ENCODE measurements at regions of chr2 and their contacts with region 1.

Region 1: DNA sequence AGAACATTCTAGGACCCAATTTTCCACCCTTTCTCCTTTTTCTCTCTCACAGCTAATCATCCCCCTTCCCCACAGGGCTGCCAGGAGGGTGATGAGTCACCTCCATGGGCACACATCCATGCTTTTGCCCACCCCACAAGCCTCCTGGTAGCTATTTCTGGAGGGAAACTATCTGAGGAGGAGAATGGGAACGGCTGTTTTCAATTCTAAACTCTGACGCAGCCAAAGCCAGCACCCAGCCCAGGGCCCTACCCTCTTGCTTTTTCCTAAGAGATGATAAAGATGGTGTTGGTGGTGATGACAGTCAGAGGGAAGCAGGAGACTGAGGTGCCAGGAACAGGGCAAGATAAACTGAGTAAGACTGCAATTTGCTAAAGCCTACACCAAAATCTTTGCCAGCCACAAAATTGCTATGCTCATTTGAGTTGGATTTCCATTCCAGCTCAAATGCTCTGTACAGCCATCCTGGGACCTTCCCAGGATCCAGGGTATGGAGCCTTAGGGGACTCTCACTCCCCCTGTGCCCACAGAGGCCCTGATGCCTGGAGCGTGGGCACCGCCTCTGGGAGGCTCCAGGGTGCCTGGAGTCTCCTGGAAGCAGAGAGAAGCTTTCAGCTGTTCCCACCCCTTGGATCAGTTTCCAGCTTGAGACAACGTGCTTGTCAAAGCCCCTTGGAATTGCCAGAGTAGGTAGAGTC is 62.0 kb upstream of the FZD7 start:
- DNase-seq: no peak
- H3K4me3 ChIP-seq: peak overlapping the region; percentile 29 to 53 (median 48)
- H3K27ac ChIP-seq: peak overlapping the region; percentile 70
- H3K4me1 ChIP-seq: peaks cover 17 to 43% (median 36%) of the 10 kb centered on the region in 4 experiments
- H3K27me3 ChIP-seq: no peaks in the 10 kb centered on the region
- CTCF ChIP-seq: no peak
- EP300 ChIP-seq: no peak
- POLR2A ChIP-seq: no peak
- RAD21 ChIP-seq: no peak

Region 2: GRCh38 chr2:201654616-201655384 is 316.9 kb before region 1 on chr2:
- CTCF ChIA-PET with region 1: no interaction called
- POLR2A ChIA-PET with region 1: no interaction called
- DNase-seq: no peak
- H3K4me3 ChIP-seq: no peak overlapping the region
- H3K27ac ChIP-seq: no peak overlapping the region
- H3K4me1 ChIP-seq: no peaks in the 10 kb centered on the region; a peak in 1 of 7 replicates
- H3K27me3 ChIP-seq: no peaks in the 10 kb centered on the region
- CTCF ChIP-seq: no peak
- EP300 ChIP-seq: no peak
- POLR2A ChIP-seq: no peak
- RAD21 ChIP-seq: no peak

Region 3: GRCh38 chr2:201984800-201985525 is 13.3 kb after region 1 on chr2:
- CTCF ChIA-PET with region 1: interaction called, 6 read pairs
- POLR2A ChIA-PET with region 1: interaction called, 46 read pairs
- DNase-seq: no peak
- H3K4me3 ChIP-seq: no peak overlapping the region
- H3K27ac ChIP-seq: no peak overlapping the region
- H3K4me1 ChIP-seq: peaks cover 2 to 8% (median 4%) of the 10 kb centered on the region in 4 experiments; a peak in 3 of 7 replicates
- H3K27me3 ChIP-seq: no peaks in the 10 kb centered on the region
- CTCF ChIP-seq: peak; percentile 6 to 17 (median 16); a peak in 3 of 4 replicates
- EP300 ChIP-seq: no peak
- POLR2A ChIP-seq: no peak
- RAD21 ChIP-seq: peak; percentile 5 to 37; a peak in 2 of 4 replicates

Region 4: GRCh38 chr2:201996006-201996405 is 24.3 kb after region 1 on chr2:
- CTCF ChIA-PET with region 1: interaction called, 3 read pairs
- POLR2A ChIA-PET with region 1: interaction called, 49 read pairs
- DNase-seq: peak; percentile 79 to 94
- H3K4me3 ChIP-seq: peak overlapping the region in 1 of 4 experiments; percentile 26; a peak in 1 of 8 replicates
- H3K27ac ChIP-seq: peak overlapping the region; percentile 58
- H3K4me1 ChIP-seq: peaks cover 9 to 24% (median 22%) of the 10 kb centered on the region in 4 experiments
- H3K27me3 ChIP-seq: no peaks in the 10 kb centered on the region; a peak in 1 of 7 replicates
- CTCF ChIP-seq: no peak
- EP300 ChIP-seq: peak; percentile 52 to 95; a peak in 2 of 3 replicates
- POLR2A ChIP-seq: no peak
- RAD21 ChIP-seq: peak in 1 of 2 experiments; percentile 9; a peak in 1 of 4 replicates

Region 5: DNA sequence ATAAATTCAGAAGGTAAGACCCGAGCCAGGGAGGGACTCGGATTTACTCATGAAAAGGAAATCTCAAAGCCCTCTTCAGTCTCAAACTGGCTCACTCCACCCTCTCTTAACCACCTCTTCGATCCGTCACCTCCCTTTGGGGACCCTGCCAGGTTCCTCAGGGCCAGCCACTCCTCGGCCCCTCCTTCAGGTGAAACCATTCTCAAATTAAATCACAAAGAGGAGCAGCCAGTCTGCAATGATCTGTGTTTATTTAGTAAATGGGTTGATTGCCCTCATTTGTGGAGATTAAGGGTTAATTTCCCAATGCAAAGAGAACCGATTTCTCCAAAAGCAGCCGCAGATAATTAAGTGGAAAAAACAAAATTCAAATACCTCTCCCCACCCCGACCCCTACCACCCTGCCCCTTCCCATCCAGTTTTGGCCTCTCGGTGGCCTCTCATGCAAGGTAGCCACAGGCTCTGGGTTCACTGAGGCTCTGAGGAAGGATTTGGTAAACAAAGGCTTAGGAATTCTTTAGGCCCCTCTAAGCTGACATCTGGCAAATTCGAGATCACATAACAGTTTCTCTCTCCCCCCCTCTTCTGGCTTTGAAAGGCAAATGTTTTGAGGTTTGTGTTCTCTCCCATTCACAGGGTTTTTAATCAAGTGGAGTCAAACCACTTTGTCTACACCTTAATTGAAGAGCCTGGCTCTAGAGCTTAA is 51.7 kb after region 1 on chr2:
- CTCF ChIA-PET with region 1: interaction called, 11 read pairs
- POLR2A ChIA-PET with region 1: interaction called, 18 read pairs
- DNase-seq: peak; percentile 71 to 84
- H3K4me3 ChIP-seq: peak overlapping the region in 1 of 4 experiments; percentile 44; a peak in 2 of 8 replicates
- H3K27ac ChIP-seq: peak overlapping the region; percentile 66; the same call in 1 of the 2 replicates
- H3K4me1 ChIP-seq: peaks cover 13 to 28% (median 25%) of the 10 kb centered on the region in 4 experiments
- H3K27me3 ChIP-seq: peaks cover 0 to 3% (median 0%) of the 10 kb centered on the region in 4 experiments; a peak in 3 of 7 replicates
- CTCF ChIP-seq: peak in 2 of 3 experiments; percentile 2 to 16; a peak in 1 of 4 replicates
- EP300 ChIP-seq: peak in 1 of 2 experiments; percentile 64; a peak in 1 of 3 replicates
- POLR2A ChIP-seq: no peak
- RAD21 ChIP-seq: peak; percentile 9 to 35; a peak in 2 of 4 replicates

Region 6: GRCh38 chr2:202032754-202033320 is 61.2 kb after region 1 on chr2:
- CTCF ChIA-PET with region 1: interaction called, 6 read pairs
- POLR2A ChIA-PET with region 1: interaction called, 33 read pairs
- DNase-seq: peak in 1 of 2 experiments; percentile 84
- H3K4me3 ChIP-seq: peak overlapping the region; percentile 85 to 98 (median 98)
- H3K27ac ChIP-seq: peak overlapping the region; percentile 96
- H3K4me1 ChIP-seq: peaks cover 4 to 14% (median 6%) of the 10 kb centered on the region in 4 experiments
- H3K27me3 ChIP-seq: no peaks in the 10 kb centered on the region
- CTCF ChIP-seq: no peak
- EP300 ChIP-seq: peak in 1 of 2 experiments; percentile 71; a peak in 1 of 3 replicates
- POLR2A ChIP-seq: peak in 1 of 2 experiments; percentile 80; a peak in 2 of 3 replicates
- RAD21 ChIP-seq: no peak

Region 7: DNA sequence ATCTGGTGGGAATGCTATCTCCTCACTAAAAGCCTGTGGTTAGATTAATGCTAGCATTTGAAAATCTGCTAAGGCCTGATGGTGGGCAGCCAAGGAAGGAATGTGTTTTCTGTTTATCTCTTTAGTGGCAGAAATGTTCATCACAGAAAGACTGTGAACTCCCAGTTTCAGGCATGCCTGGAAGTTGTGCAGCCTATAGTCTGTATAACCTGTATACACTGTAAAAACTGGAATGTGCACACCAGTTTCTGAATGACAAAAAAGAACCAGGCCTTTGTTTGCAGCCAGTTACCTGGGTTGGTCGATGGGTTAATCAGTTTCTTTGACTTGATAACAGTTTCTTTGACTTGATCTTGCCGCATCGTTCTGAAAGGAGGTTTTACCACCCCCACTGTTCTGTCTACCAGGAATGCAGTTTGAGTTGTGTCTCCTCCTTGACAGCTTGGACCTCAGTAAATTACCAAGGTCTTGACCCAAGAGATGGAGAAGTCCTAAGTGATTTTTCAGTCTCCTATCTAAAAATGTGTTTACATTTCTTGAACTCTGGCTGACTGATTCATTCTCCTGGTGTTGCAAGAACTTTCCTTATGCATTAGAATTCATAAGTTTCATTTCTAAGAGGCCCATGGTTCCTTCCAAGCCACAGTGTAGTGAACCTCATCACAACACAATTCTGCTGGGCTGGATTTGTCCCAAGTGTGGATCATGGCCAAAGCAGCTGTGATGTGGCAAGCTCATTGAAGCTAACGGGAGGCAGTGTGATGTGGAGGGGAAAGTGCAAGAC is 163.6 kb after region 1 on chr2:
- CTCF ChIA-PET with region 1: no interaction called
- POLR2A ChIA-PET with region 1: no interaction called
- DNase-seq: no peak
- H3K4me3 ChIP-seq: no peak overlapping the region
- H3K27ac ChIP-seq: no peak overlapping the region
- H3K4me1 ChIP-seq: no peaks in the 10 kb centered on the region; a peak in 1 of 7 replicates
- H3K27me3 ChIP-seq: no peaks in the 10 kb centered on the region
- CTCF ChIP-seq: no peak
- EP300 ChIP-seq: no peak
- POLR2A ChIP-seq: no peak
- RAD21 ChIP-seq: no peak

Measured in H1 (cell line).